Ovary (tissue), 10 donors: ENCODE measurements at regions of chr11 and their contacts with region 1.

Region 1: DNA sequence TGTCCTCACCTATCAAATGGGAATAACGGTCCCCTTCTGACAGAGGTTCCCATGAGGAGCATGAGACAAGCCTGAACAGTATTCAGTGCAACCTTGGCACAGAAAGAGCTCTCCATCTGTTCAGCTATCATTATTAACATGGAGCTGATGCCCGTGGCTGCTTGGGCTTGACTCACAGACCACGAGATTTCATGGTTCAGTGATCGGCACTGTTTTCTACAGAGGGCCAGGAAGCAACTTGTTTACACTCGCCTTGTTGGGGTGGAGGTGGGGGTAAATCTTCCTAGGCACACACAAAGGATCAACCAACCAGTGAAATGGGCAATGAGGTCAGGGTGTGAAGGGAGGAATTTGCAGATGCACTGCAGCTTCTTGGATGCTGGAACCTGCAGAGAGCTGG is 88.2 kb downstream of the CWC15 start:
- DNase-seq: no peak
- H3K4me3 ChIP-seq: no peak overlapping the region
- H3K27ac ChIP-seq: no peak overlapping the region
- H3K4me1 ChIP-seq: no peaks in the 10 kb centered on the region
- H3K27me3 ChIP-seq: no peaks in the 10 kb centered on the region
- CTCF ChIP-seq: no peak
- EP300 ChIP-seq: no peak
- POLR2A ChIP-seq: no peak

Region 2: DNA sequence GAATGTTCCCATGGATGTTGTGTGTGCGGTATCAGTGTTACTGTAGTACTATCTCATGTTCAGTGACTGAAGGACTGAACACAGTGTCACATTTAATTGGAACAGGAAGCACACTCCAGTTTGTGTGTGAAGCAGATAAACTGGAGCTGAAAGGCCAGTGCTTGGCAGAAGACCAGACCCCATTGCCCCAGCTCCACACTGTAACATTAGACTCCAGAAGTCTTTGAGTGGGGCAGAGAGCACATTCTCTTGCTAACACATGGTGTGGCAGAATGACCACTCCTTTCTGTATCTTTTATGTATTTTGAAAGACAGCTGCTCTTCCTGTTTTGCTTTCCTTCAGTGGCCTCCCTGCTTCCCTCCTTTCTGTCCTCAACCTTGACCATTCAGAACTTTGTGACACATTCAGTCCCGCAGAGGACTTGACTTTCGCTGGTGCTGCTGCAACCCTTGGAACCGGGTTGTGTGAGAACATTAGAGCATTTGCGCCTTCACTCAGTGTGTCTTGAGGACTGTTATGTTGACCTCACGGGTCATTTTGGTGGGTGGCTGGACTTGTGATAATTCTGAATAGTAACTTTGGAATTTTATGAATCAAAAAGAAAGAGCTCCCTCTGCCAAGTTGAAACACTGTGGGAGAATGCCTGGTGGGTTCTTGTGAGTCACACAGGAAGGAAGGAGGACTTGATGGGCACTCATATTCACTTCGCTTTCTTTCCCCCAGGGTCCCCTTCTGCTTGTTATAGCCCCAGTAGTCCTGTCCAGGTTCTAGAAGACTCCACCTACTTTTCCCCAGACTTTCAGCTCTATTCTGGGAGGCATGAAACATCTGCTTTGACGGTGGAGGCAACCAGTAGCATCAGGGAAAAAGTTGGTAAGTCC is 90.6 kb before region 1 on chr11:
- intact Hi-C with region 1: loop called in 1 of 4 experiments (anchors 5 kb)
- DNase-seq: peak; percentile 51 to 73 (median 61)
- H3K4me3 ChIP-seq: no peak overlapping the region
- H3K27ac ChIP-seq: peak overlapping the region in 1 of 2 donors; percentile 46
- H3K4me1 ChIP-seq: peaks cover 18% of the 10 kb centered on the region
- H3K27me3 ChIP-seq: no peaks in the 10 kb centered on the region
- CTCF ChIP-seq: no peak
- EP300 ChIP-seq: no peak
- POLR2A ChIP-seq: no peak

Region 3: GRCh38 chr11:94987378-94987777 is 102.2 kb after region 1 on chr11:
- intact Hi-C with region 1: no loop called
- DNase-seq: no peak
- H3K4me3 ChIP-seq: no peak overlapping the region
- H3K27ac ChIP-seq: no peak overlapping the region
- H3K4me1 ChIP-seq: no peaks in the 10 kb centered on the region
- H3K27me3 ChIP-seq: no peaks in the 10 kb centered on the region
- CTCF ChIP-seq: no peak
- EP300 ChIP-seq: no peak
- POLR2A ChIP-seq: no peak